ENCODE measurements at regions of chr3 and their contacts with region 1.

Region 1: GRCh38 chr3:129627429-129628168 is 21.1 kb upstream of the PLXND1 start:
- DNase-seq: peak; percentile 90

Region 2: GRCh38 chr3:129695230-129695629 is 67.6 kb after region 1 on chr3:
- intact Hi-C with region 1: loop called in 1 of 2 experiments (anchors 2 kb)
- DNase-seq: no peak

Region 3: GRCh38 chr3:129934234-129935123 is 306.9 kb after region 1 on chr3:
- intact Hi-C with region 1: loop called (anchors 5 kb)
- DNase-seq: no peak

Region 4: GRCh38 chr3:130428871-130429712 is 801.5 kb after region 1 on chr3:
- intact Hi-C with region 1: no loop called
- DNase-seq: no peak